ENCODE measurements at regions of chr9 and their contacts with region 1.

Region 1: DNA sequence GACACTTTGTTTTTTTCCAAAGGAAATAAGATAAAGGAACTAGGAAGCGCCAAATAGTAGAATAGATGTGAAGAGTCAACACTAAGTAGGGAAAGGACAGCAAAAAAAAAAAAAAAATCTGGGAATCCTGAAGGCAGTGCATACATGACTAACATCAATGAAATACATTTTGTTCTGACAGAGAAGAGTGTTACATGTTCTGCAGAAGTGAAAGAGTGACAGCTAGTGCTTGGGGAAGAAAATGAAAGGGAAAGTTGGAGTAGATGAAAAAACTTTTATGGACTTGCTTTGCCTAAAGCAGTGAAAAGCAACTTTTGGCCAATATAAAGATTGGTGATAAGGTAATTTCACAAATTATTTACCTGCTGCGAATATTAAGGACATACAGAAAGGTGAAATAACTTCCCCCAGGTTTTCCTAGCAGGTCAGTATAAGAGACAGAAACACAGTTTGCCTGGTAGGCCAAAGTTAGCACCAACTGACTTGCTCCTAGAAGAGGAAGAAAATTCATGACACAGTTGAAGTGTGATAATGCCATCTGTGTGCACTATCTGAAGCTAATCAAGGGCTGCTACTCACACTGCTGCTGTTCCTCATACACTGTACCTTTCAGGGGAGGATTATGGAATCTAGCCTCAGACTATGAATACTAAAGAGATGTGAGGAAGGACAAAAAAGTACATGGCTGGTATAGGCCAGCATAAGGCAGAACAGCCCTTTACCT is 38.6 kb downstream of the RANBP6 start:
- DNase-seq: peak; percentile 32
- CTCF ChIP-seq: peak; percentile 41

Region 2: DNA sequence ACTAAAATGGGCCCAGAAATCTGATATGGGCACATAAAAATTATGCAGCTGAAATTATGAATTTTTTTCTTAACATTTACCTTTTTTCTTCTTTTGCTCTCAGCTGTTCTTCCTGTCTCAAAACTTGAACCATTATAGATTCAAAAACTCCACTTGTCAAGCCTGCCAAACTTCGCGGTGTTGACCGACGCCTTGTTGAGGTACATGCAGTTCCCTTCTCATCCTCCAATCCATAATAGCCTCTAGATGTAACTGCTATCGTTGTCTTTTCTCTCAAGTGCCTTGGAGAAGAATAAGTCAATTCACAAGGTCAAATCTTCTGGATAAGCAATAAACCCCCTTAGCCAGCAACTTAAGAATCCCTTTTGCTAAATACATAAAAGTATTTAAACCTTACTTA is 11.4 kb after region 1 on chr9:
- CTCF ChIA-PET with region 1: interaction called, 11 read pairs
- POLR2A ChIA-PET with region 1: no interaction called
- DNase-seq: no peak
- CTCF ChIP-seq: no peak